A549 (cell line): ENCODE measurements at regions of chr17 and their contacts with region 1.

Region 1: GRCh38 chr17:40287494-40288369 is at the start of gene CDC6:
- DNase-seq: peak; percentile 99 to 100
- ATAC-seq: peak; percentile 94 to 97
- H3K4me3 ChIP-seq: peak within 1 kb of the TSS; percentile 72
- H3K27ac ChIP-seq: peak within 1 kb of the TSS; percentile 70 to 83
- H3K4me1 ChIP-seq: peaks cover 34% of the 10 kb centered on the region
- CTCF ChIP-seq: no peak
- EP300 ChIP-seq: no peak; a peak in 1 of 5 replicates
- POLR2A ChIP-seq: peak; percentile 77
- RAD21 ChIP-seq: no peak
- polyA plus RNA-seq, gene CDC6: 71.4 and 79.5 TPM in 2 replicates

Region 2: DNA sequence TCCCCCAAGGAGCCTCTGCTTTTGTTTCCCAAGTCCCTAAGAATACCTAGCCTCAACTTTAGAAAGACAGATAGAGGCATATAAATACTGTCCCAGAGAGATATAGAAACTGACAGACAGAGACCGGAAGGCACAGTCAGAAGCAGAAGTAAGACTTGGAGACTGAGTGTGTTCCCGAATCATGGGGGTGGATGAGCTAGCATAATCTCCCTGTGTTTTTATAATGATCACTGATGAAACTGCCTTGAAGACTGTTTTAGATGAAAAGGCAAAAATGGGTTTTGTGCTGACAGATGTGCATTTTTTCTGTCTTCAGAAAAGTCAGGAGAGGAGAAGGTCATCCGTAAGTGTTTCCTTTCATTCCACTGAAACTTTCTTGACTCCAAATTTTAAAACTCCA is 315.5 kb before region 1 on chr17:
- CTCF ChIA-PET with region 1: no interaction called
- POLR2A ChIA-PET with region 1: no interaction called
- DNase-seq: no peak
- ATAC-seq: no peak
- H3K4me3 ChIP-seq: no peak overlapping the region
- H3K27ac ChIP-seq: no peak overlapping the region
- H3K4me1 ChIP-seq: no peaks in the 10 kb centered on the region
- CTCF ChIP-seq: no peak
- EP300 ChIP-seq: no peak
- POLR2A ChIP-seq: no peak
- RAD21 ChIP-seq: no peak

Region 3: DNA sequence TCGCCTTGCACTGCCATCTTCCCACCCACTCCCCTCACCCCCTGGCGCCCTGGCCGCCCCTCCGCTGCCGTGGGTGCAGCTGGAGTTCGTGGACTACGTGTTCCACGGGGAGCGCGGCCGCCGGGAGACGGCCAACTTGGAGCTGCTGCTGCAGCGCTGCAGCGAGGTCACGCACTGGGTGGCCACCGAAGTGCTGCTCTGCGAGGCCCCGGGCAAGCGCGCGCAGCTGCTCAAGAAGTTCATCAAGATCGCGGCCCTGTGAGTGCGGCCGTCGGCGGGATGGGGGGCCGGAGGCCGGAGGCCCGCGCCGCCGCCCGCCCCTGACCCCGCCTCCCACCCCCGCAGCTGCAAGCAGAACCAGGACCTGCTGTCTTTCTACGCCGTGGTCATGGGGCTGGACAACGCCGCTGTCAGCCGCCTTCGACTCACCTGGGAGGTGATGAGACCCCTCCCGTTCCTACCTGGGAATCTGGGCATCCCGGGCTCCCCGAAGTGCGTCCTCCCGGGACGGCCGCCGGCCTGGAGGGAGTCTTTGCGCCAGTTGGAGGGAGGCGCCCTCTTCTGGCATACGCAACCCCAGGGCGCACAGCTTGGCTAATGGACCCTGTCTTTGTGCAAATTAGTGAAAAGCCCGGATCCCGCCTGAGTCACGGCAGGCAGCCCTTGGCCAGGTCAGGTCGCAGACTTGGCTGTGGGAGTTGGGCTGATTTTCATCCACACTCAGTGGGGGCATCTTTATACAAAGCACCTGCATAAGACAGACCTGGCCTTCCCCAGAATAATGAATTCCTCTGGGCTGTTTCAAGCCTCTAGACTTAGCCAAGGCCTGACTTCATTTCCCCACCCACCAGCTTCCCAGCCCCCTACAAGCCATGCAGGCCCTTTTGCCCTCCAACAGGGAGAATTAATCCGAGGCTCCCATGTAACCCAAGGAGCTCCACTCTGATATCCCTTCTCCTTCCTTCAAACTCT is 96.2 kb before region 1 on chr17:
- CTCF ChIA-PET with region 1: interaction called, 232 read pairs
- POLR2A ChIA-PET with region 1: no interaction called
- DNase-seq: peak; percentile 86 to 96
- ATAC-seq: peak; percentile 83 to 91
- H3K4me3 ChIP-seq: peak overlapping the region; percentile 47
- H3K27ac ChIP-seq: peak overlapping the region; percentile 50 to 70
- H3K4me1 ChIP-seq: peaks cover 17% of the 10 kb centered on the region
- CTCF ChIP-seq: peak; percentile 95
- EP300 ChIP-seq: no peak
- POLR2A ChIP-seq: no peak; the same call in 1 of the 2 replicates
- RAD21 ChIP-seq: peak; percentile 74 to 77

Region 4: GRCh38 chr17:40219073-40219860 is 68.5 kb before region 1 on chr17 and contains the start of gene WIPF2:
- CTCF ChIA-PET with region 1: interaction called, 47 read pairs
- POLR2A ChIA-PET with region 1: interaction called, 7 read pairs
- DNase-seq: peak; percentile 96 to 98
- ATAC-seq: peak; percentile 95 to 98
- H3K4me3 ChIP-seq: peak within 1 kb of the TSS; percentile 70
- H3K27ac ChIP-seq: peak within 1 kb of the TSS; percentile 87 to 92
- H3K4me1 ChIP-seq: peaks cover 17% of the 10 kb centered on the region; the same call in 2 of the 3 replicates
- CTCF ChIP-seq: 0 out of 3 replicates have a peak, but pooled peaks have one; percentile 29
- EP300 ChIP-seq: no peak
- POLR2A ChIP-seq: no peak; the same call in 1 of the 2 replicates
- RAD21 ChIP-seq: no peak
- polyA plus RNA-seq, gene WIPF2: 13.8 and 15.3 TPM in 2 replicates

Region 5: GRCh38 chr17:40259505-40259904 is 28.2 kb before region 1 on chr17:
- CTCF ChIA-PET with region 1: interaction called, 19 read pairs
- POLR2A ChIA-PET with region 1: interaction called, 5 read pairs
- DNase-seq: no peak
- ATAC-seq: no peak
- H3K4me3 ChIP-seq: no peak overlapping the region
- H3K27ac ChIP-seq: no peak overlapping the region
- H3K4me1 ChIP-seq: no peaks in the 10 kb centered on the region
- CTCF ChIP-seq: no peak
- EP300 ChIP-seq: no peak
- POLR2A ChIP-seq: no peak
- RAD21 ChIP-seq: no peak

Region 6: DNA sequence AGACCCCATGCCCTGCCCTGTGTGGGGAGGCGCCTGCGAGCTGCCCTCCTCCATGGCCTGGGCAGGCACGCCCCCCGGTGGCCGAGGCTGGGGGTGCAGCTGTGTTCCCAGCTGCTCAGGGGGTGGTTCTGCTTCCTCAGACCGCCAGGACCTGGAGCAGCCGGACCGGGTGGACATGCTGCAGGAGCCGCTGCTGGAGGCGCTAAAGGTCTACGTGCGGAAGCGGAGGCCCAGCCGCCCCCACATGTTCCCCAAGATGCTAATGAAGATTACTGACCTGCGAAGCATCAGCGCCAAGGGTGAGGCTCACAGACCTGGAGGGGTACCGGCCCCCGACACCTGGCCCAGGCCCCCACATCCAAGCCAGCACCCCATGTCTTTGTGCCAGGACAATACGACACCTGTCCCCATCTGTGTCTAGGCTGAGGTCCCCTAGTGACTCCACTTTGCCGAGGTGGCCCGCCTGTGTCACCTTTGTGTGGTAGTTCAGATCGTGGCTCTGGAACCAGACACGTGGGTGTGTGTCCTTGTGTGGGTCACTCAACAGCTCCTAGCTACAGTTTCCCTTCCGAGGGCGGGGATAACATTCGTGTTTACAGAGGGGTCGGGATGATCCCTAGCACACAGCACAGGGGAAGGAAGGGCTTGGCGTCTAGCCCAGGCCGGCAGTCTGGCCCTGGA is 67.5 kb after region 1 on chr17:
- CTCF ChIA-PET with region 1: interaction called, 2,395 read pairs
- POLR2A ChIA-PET with region 1: interaction called, 3 read pairs
- DNase-seq: peak; percentile 77 to 97
- ATAC-seq: peak; percentile 58 to 84
- H3K4me3 ChIP-seq: no peak overlapping the region
- H3K27ac ChIP-seq: peak overlapping the region in 1 of 2 experiments; percentile 62; a peak in 3 of 6 replicates
- H3K4me1 ChIP-seq: peaks cover 52% of the 10 kb centered on the region
- CTCF ChIP-seq: peak; percentile 98
- EP300 ChIP-seq: no peak
- POLR2A ChIP-seq: no peak
- RAD21 ChIP-seq: peak; percentile 99 to 100

Region 7: DNA sequence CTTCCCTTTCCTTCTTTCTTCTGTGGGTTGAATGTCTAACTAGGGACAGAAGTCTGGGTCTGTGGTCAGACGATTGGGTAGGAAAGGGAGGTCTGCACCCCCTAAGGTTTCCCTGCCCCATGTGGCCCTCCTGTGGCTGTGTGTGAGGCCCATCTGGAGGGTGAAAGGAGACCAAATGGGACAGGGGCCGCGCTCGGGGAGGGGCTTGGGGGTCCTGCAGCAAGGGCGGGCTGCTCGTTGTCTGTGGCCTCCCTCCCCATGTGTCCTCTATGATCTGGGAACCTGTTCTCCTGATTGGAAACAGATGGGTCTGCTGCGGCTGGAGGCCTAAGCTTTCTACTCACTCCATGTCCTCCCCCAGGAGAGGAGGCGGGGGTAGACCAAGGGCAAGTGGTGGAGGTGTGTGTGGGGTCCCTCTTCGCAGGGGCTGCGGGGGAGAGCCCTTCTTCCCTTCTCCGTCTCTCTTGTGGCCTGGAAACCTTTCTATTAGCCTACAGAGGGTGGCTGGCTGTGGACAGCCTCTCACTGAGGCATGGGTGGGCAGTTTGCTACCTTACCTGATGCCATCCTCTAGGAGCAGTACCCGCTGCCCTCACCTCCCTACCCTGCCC is 174.1 kb after region 1 on chr17:
- CTCF ChIA-PET with region 1: no interaction called
- POLR2A ChIA-PET with region 1: no interaction called
- DNase-seq: peak in 1 of 2 experiments; percentile 66
- ATAC-seq: peak; percentile 2 to 6; a peak in 4 of 6 replicates
- H3K4me3 ChIP-seq: no peak overlapping the region
- H3K27ac ChIP-seq: peak overlapping the region; percentile 71 to 90
- H3K4me1 ChIP-seq: peaks cover 72% of the 10 kb centered on the region
- CTCF ChIP-seq: no peak
- EP300 ChIP-seq: 0 out of 5 replicates have a peak, but pooled peaks of 1 of the 2 experiments have one; percentile 19
- POLR2A ChIP-seq: 0 out of 2 replicates have a peak, but pooled peaks have one; percentile 4
- RAD21 ChIP-seq: no peak